ENCODE measurements at regions of chr6 and their contacts with region 1.

Region 1: GRCh38 chr6:70107852-70108629 is 194.8 kb downstream of the COL9A1 start:
- DNase-seq: no peak
- H3K4me3 Mint-ChIP-seq: no peak overlapping the region
- H3K27ac Mint-ChIP-seq: no peak overlapping the region
- H3K4me1 Mint-ChIP-seq: no peaks in the 10 kb centered on the region
- H3K27me3 Mint-ChIP-seq: peaks cover 8% of the 10 kb centered on the region

Region 2: DNA sequence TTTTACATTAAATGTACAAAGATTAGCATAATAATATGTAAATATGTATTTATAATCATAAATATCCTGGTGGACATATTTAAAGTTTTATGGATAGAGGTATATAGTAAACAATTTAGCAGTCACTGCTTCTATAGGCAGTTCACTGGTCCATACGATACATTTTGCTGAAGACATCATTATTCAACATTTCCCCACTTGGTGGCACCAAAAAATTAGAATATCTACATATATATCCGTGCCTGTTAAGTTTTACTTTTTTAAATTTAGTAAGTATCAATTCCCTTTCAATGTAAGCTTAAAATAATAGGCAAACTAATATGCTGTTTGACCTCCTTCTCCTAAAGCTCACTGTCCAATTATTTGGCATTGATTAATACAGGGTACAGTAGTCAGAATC is 375.4 kb before region 1 on chr6:
- intact Hi-C with region 1: loop called (anchors 5 kb)
- DNase-seq: no peak
- H3K4me3 Mint-ChIP-seq: no peak overlapping the region
- H3K27ac Mint-ChIP-seq: no peak overlapping the region
- H3K4me1 Mint-ChIP-seq: no peaks in the 10 kb centered on the region
- H3K27me3 Mint-ChIP-seq: no peaks in the 10 kb centered on the region

Region 3: DNA sequence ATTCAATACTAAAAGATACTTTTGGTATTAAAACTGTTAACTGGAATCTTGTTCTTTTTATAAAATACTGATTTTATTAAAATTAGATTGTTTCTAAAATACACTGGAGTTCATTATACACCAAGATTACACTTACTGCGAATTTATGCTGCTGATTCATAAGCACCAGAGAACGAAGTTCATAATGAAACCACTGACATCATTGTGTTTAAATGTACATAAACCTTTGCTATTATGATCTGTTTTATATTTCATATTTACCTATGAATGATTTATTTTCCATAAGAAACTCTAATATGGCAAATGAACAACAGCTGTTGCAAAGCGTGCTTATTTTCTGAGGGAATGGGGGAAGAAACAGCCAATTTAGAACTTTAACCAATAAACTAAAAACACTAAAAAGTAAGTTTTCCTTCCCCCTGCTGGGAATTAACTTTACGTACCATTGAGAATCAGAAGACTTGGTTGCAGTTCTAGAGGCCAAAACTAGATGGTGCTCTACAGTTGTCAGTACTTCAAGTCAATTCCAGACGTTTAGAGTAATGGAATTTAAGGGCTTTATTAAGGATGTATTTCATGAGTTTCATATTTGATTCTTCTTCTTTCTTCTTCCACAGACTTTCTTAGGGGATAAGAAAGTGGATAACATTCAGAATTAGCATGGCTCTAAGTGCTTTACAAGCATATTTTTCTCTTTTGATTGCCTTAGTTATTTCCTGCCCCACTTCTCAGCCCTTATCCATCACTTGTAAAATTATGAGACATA is 272.4 kb before region 1 on chr6:
- intact Hi-C with region 1: loop called (anchors 2 kb)
- DNase-seq: no peak
- H3K4me3 Mint-ChIP-seq: no peak overlapping the region
- H3K27ac Mint-ChIP-seq: no peak overlapping the region
- H3K4me1 Mint-ChIP-seq: peaks cover 7% of the 10 kb centered on the region
- H3K27me3 Mint-ChIP-seq: peaks cover 28% of the 10 kb centered on the region

Region 4: DNA sequence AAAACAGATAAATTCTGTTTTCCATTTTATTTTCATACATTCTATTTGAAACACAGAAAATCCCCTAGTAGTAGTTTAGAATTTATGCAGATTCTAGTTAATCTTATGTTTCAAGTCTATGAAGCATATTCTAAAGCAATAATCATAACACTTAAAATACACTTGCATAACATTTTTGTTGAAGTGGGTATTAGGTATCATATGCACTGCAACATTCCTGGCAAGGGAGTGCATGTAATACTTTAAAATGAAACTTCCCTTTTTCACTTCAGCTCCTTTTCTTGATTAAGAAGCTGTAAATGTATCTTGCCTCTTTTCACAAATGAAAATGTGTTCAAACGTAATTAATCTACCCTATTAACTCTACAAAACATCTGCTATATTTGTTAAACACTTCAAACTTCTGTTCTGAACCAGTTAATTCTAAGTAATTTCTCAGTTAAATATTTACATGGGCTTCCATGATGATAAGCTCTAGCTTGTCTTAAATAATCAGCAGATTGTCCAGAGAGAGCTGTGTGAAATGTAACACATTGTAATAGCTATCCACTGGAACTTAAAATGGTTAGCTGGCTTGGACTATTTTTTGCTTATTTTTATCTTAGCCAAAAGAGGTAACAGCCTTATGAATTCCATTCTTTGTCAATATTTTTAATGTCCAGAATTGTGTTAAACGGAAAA is 48.9 kb before region 1 on chr6:
- intact Hi-C with region 1: no loop called
- DNase-seq: no peak
- H3K4me3 Mint-ChIP-seq: no peak overlapping the region
- H3K27ac Mint-ChIP-seq: no peak overlapping the region
- H3K4me1 Mint-ChIP-seq: no peaks in the 10 kb centered on the region
- H3K27me3 Mint-ChIP-seq: no peaks in the 10 kb centered on the region

Region 5: GRCh38 chr6:70086801-70087200 is 21.2 kb before region 1 on chr6:
- intact Hi-C with region 1: no loop called
- DNase-seq: no peak
- H3K4me3 Mint-ChIP-seq: no peak overlapping the region
- H3K27ac Mint-ChIP-seq: no peak overlapping the region
- H3K4me1 Mint-ChIP-seq: no peaks in the 10 kb centered on the region
- H3K27me3 Mint-ChIP-seq: peaks cover 2% of the 10 kb centered on the region

Region 6: GRCh38 chr6:70258483-70258882 is 150.4 kb after region 1 on chr6:
- intact Hi-C with region 1: no loop called
- DNase-seq: no peak
- H3K4me3 Mint-ChIP-seq: no peak overlapping the region
- H3K27ac Mint-ChIP-seq: no peak overlapping the region
- H3K4me1 Mint-ChIP-seq: no peaks in the 10 kb centered on the region
- H3K27me3 Mint-ChIP-seq: no peaks in the 10 kb centered on the region

Region 7: GRCh38 chr6:70315079-70315751 is 207.2 kb after region 1 on chr6:
- intact Hi-C with region 1: no loop called
- DNase-seq: no peak
- H3K4me3 Mint-ChIP-seq: no peak overlapping the region
- H3K27ac Mint-ChIP-seq: no peak overlapping the region
- H3K4me1 Mint-ChIP-seq: peaks cover 9% of the 10 kb centered on the region
- H3K27me3 Mint-ChIP-seq: peaks cover 30% of the 10 kb centered on the region